Heart right ventricle (tissue), 16 donors: ENCODE measurements at regions of chr15 and their contacts with region 1.

Region 1: GRCh38 chr15:73305331-73306211 is 63.2 kb downstream of the HCN4 start:
- DNase-seq: peak in 1 of 2 donors; percentile 42
- ATAC-seq: peak; percentile 52 to 89 (median 83)
- H3K4me3 ChIP-seq: no peak overlapping the region
- H3K27ac ChIP-seq: no peak overlapping the region
- H3K4me1 ChIP-seq: peaks cover 0 to 17% (median 0%) of the 10 kb centered on the region in 9 donors
- H3K27me3 ChIP-seq: no peaks in the 10 kb centered on the region
- CTCF ChIP-seq: peak; percentile 29 to 69 (median 56)

Region 2: DNA sequence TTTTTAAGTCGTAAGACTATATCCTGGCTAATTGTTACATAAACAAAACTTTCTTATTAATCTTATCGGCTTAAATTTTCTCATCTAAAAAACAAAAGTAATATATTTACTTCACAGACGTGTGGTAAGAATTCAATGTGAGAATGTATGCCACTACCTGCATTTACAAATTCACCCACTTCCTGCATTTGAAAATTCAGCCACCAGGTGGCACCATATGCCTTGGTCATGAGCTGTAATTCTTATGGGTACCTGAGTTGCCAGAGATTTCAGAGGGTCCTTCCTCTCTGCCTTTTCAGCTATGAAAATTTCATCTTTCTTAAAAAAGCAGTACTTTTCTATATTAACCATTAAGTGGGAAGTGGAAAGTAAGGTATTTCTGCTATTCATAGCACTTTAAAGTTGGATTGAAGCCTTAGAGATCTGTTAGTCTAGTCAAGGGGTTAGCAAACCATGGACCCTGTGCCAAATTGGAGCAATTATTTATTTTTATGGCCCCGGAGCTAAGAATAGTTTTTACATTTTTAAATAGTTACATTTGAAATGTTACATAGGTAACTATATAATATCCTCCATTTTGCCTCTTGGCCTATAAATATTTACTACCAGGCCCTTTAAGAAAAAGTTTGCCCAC is 64.6 kb before region 1 on chr15:
- intact Hi-C with region 1: no loop called
- DNase-seq: peak in 1 of 2 donors; percentile 67
- ATAC-seq: peak in 2 of 8 donors; percentile 51 to 61
- H3K4me3 ChIP-seq: no peak overlapping the region
- H3K27ac ChIP-seq: no peak overlapping the region
- H3K4me1 ChIP-seq: peaks cover 0 to 12% (median 0%) of the 10 kb centered on the region in 9 donors
- H3K27me3 ChIP-seq: no peaks in the 10 kb centered on the region
- CTCF ChIP-seq: peak; percentile 70 to 94 (median 88)

Region 3: GRCh38 chr15:73254598-73254997 is 51.0 kb before region 1 on chr15:
- intact Hi-C with region 1: no loop called
- DNase-seq: no peak
- ATAC-seq: no peak
- H3K4me3 ChIP-seq: no peak overlapping the region
- H3K27ac ChIP-seq: no peak overlapping the region
- H3K4me1 ChIP-seq: no peaks in the 10 kb centered on the region
- H3K27me3 ChIP-seq: no peaks in the 10 kb centered on the region
- CTCF ChIP-seq: no peak

Region 4: GRCh38 chr15:73539212-73540125 is 233.9 kb after region 1 on chr15:
- intact Hi-C with region 1: loop called in 4 of 10 experiments (anchors 5 to 10 kb)
- DNase-seq: no peak
- ATAC-seq: no peak
- H3K4me3 ChIP-seq: no peak overlapping the region
- H3K27ac ChIP-seq: no peak overlapping the region
- H3K4me1 ChIP-seq: peaks cover 0 to 2% (median 0%) of the 10 kb centered on the region in 9 donors
- H3K27me3 ChIP-seq: no peaks in the 10 kb centered on the region
- CTCF ChIP-seq: peak in 2 of 9 donors; percentile 22 to 25

Region 5: DNA sequence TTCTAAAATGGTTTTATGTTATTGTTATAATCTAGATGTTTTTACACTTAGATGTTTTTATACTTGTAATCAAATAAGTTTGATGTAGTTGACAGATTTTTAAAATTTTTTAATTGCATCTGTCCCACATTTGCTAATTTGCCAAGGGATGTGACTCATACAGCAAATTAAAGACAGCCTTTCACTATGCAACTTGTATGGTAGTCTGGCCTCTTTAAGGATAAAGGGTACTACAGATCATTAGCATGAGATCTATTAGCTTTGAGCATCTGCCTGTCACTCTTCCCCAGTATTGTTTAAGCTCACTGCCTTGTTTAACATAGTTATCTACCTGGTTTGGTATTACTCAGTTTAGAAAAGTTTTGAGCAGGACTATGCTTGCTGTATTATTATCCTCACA is 244.6 kb after region 1 on chr15:
- intact Hi-C with region 1: loop called in 5 of 10 experiments (anchors 10 kb)
- DNase-seq: no peak
- ATAC-seq: no peak
- H3K4me3 ChIP-seq: no peak overlapping the region
- H3K27ac ChIP-seq: no peak overlapping the region
- H3K4me1 ChIP-seq: peaks cover 0 to 6% (median 0%) of the 10 kb centered on the region in 9 donors
- H3K27me3 ChIP-seq: no peaks in the 10 kb centered on the region
- CTCF ChIP-seq: no peak

Region 6: GRCh38 chr15:73639464-73640188 is 334.1 kb after region 1 on chr15:
- intact Hi-C with region 1: loop called in 6 of 10 experiments (anchors 5 to 10 kb)
- DNase-seq: no peak
- ATAC-seq: no peak
- H3K4me3 ChIP-seq: no peak overlapping the region
- H3K27ac ChIP-seq: no peak overlapping the region
- H3K4me1 ChIP-seq: peaks cover 0 to 15% (median 2%) of the 10 kb centered on the region in 9 donors
- H3K27me3 ChIP-seq: peaks cover 0 to 21% (median 0%) of the 10 kb centered on the region in 7 donors
- CTCF ChIP-seq: no peak